ENCODE measurements at regions of chr2 and their contacts with region 1.

Region 1: GRCh38 chr2:72770879-72771461 is 54.9 kb downstream of the EXOC6B start:
- DNase-seq: peak in 2 of 10 donors; percentile 37 to 59

Region 2: GRCh38 chr2:72825241-72826155 is 54.5 kb after region 1 on chr2 and contains the start of gene EXOC6B:
- intact Hi-C with region 1: loop called (anchors 5 kb)
- DNase-seq: peak; percentile 89 to 99 (median 96)

Region 3: DNA sequence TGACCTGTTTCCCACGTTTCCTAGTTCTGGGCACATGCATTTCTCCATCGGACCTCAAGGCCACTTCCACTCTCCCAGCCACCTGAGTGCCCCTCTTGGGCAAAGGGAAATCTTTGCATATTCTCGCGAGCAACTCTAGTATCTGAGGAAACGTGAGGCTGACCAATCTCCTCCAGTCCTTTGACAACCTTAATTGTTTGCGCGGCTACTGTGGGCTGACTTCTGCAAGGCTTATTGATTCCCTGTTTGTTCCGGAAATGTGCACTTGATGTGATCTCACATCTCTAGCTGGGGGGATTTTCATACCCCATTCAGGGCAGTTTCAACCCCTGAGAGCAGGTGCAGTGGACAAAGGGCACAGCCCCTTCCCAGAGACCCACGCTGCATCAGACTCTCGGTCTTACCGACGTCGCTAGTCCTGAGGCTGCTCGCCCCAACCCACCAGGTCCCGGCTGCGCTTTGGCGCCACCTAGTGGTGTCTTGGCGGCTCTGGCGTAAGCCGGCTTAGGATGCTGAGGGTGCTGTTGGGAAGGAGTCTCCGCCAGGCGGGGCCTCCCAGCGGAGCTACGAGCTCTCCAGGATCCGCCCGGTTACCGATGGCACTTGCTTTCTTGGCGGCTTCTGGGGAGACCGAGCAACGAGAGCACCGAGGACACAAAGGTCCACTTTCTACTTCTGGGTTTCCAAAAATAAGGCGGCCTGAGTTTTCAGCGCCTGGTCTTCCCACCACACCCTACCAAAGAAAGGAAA is 91.4 kb after region 1 on chr2:
- intact Hi-C with region 1: loop called (anchors 1 kb)
- DNase-seq: peak; percentile 77 to 98 (median 92)